Cardiac septum (tissue), 1 donor: ENCODE measurements at regions of chr16 and their contacts with region 1.

Region 1: GRCh38 chr16:31073968-31074813 is at the starts of genes ZNF646 and ZNF668:
- DNase-seq: peak; percentile 100
- total RNA-seq, gene ZNF646: 9.6 TPM
- total RNA-seq, gene ZNF668: 5.9 TPM

Region 2: GRCh38 chr16:30395155-30395991 is 678.8 kb before region 1 on chr16 and contains the start of gene ZNF48:
- intact Hi-C with region 1: no loop called
- DNase-seq: peak; percentile 91
- total RNA-seq, gene ZNF48: 6.1 TPM

Region 3: GRCh38 chr16:30957456-30958174 is 116.6 kb before region 1 on chr16 and contains the start of gene SETD1A:
- intact Hi-C with region 1: loop called (anchors 5 kb)
- DNase-seq: peak; percentile 98
- total RNA-seq, gene SETD1A: 9.6 TPM

Region 4: DNA sequence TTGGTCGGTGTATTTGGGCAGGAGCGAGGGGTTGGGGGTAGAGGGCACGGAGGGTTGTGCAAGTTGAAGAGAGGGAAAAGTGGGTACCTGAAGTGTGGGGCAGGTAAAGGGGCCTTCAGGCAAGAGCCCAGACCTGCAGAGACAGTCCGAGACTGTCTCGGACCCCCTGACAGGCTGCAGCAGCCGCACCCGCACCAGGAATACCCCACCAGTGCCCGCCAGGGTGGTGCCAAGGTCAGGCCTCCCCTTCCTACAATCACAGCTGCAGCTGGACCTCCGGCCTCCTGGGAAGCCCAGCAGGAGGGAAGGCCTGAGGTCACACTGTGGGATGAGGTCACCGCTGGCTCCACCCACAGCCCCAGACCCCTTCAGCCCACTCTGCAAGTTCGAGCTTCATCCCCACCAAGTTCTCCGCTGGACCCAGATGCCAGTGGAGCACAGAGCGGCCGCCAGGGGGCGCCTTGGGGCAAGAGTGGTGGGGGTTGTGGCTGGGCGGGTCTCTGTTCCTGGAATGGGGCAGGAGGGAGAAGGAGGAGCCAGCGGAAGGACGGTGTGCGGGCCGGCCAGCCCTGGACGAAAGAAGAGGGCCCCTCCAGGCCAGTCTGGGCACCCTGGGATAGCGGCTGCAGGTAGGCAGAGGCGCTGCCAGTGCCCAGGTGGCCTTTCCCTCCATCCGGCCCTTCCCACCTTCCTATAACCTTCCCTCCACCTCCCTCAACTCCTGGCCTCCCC is 89.4 kb before region 1 on chr16 and contains the start of gene HSD3B7:
- intact Hi-C with region 1: loop called (anchors 5 kb)
- DNase-seq: peak; percentile 95
- total RNA-seq, gene HSD3B7: 5.4 TPM

Region 5: DNA sequence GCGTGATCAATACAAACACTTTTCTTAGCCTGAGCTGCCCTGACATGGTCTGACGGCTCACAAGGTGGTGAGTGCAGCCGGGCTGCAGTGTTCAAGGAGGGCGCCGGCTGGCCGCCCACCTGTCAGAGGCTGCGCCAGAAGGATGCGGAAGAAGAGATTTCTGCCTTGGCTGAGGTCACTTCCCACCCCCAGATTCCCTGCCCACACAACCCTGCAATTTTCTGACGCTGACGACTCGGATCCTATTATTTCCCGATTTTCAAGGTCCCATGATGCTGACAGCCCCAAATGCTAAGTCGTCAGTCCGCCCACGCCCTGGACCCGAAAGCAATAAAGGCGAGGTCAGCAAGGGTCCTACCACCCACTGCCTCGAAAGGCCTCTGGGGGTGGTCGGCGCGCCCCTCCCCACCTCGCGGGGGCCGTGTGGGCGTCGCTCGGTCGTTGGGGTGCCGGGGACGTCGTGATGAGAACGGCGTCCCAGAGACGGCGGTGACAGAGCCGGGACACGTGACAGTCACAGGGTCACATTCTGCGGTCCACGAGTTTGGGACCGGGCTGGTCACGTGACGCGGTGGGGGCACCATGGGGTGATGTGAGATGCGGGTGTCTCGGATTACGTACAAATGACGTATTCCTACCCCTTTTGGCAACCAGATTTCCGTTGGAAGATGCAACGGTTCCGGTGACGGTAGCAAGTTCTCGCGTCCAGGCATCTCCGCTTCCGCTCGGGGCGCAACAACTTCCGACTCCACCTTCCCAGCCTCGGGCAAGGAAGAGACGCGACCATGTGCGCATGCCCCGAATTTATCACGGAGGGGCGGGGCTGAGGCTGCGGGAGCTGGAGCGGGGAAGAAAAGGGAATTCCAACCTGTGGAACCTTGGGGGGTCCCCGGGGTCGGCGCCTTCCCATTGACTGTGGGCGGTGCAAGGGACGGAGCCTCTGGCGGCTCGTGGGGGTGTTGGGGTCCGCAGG is 41.2 kb before region 1 on chr16 and contains the start of gene STX4:
- intact Hi-C with region 1: loop called (anchors 5 kb)
- DNase-seq: peak; percentile 100
- total RNA-seq, gene STX4: 41.1 TPM

Region 6: DNA sequence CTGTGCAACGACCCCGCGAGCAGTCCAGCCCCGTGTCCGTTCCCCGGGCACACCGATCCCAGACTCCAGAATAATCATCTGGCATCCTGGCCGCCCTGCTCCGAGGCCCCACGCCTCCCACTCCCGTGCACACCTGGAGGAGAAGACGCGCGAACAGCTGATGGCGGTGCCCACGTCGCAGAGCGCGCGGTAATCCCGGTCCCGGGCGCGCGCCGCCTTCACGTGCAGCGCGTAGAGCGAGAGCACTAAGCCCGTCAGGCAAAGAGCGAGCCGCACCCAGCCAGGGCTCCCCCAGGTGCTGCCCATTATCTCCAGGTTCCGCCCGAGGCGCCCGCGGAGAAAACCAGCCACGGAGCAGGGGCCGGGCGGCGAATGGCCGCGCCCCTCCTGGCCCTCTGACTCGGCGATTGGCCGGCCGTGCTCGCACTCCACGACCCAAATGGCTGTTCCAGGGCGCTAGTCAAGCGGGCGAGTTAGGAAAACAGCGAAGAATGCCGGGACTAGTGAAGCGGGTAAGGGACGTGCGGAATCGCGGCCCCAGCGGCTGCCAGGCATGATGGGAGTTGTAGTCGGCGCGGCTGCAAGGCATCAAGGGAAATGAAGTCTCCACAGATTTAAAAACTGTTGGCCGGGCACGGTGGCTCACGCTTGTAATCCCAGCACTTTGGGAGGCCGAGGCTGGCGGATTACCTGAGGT is 20.4 kb after region 1 on chr16 and contains the start of gene VKORC1:
- intact Hi-C with region 1: loop called (anchors 2 kb)
- DNase-seq: peak; percentile 98
- total RNA-seq, gene VKORC1: 42.1 TPM

Region 7: DNA sequence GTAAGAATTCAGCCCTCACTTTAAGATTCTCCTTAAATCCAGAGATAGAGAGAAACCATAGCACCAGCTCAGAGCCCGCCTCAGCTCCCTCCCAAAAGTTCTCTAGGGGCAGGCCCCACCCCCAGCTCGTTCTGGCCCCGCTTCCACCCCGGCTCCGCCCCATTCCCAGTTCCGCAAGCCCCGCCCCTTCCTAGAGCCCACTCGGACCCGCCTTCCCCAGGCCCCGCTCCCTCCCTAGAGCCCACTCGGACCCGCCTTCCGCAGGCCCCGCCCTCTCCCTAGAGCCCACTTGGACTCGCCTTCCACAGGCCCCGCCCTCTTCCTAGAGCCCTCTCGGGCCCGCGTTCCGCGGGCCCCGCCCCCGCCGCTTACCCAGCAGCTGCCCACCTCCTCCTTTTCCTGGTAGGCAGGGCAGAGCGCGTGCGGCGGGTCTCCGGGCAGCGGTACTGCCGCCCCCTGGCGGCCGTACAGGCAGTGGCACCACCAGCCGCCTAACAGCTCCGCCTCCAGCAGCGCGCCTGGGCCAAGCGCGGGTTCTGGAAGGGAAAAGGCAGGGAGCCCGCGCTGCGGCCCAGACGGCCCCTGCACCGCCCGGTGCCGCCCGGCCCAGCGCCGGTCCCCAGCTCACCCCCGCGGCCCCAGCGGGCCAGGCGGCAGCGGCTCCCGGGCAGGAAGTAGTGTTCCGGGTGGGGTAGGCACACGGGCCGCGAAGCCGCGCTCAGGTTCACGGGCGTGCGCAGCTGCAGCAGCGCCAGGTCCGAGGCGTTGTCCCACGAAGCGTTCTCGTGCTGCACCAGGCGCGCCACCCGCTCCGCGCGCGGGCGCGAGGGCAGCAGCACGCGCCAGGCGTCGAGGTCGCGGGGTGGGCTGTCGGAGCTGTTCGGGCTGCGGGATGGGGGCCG is 68.2 kb after region 1 on chr16:
- intact Hi-C with region 1: loop called (anchors 2 kb)
- DNase-seq: peak; percentile 99